Posterior vena cava (tissue), 2 donors: ENCODE measurements at regions of chr6 and their contacts with region 1.

Region 1: GRCh38 chr6:16681260-16681873 is 79.9 kb downstream of the ATXN1 start:
- DNase-seq: no peak

Region 2: GRCh38 chr6:14703586-14703985 is 1977.8 kb before region 1 on chr6:
- intact Hi-C with region 1: loop called in 1 of 2 experiments (anchors 5 kb)
- DNase-seq: no peak

Region 3: DNA sequence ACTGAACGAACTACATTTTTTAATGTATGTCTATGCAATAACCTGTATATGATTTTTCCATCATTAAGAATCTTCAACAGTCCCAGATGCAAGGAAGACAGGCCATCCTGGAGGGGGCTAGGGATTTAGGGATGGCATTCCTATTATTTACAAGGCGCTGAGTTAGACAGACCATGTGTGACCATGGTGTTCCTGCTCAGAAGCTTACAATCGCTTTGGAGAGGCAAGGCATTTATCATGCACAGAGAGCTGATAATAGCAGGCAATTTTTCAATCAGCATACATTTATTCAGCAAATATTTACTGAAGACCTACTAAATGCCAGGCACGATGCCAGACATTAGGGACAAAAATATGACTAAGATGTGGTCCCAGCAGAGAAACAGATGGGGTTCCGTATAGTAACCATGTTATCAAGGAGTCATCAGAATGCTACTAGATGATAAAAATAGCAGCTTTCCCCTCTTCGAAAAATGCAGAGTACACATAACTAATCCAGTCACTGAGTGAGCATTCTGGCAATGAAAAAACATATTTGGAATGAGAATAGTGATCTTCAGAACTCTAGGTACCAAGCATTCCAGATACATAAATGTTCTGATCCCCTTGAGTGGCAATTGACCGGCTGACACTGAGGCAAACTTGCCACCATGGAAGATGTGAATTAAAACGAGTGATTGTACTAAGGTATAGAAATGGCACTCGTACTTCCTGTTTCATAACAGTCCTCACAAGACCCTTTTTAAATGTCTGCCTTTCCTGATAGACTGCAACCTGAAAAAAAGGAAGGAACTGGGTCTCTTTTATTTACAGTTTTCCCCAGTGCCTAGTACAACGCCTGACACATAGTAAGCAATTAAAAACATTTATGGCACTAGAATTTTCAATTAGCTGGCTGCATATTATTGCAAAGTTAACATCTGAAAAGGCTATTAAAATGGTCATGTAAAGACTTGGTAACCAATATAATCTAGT is 55.8 kb before region 1 on chr6:
- intact Hi-C with region 1: loop called in 1 of 2 experiments (anchors 2 kb)
- DNase-seq: no peak

Region 4: DNA sequence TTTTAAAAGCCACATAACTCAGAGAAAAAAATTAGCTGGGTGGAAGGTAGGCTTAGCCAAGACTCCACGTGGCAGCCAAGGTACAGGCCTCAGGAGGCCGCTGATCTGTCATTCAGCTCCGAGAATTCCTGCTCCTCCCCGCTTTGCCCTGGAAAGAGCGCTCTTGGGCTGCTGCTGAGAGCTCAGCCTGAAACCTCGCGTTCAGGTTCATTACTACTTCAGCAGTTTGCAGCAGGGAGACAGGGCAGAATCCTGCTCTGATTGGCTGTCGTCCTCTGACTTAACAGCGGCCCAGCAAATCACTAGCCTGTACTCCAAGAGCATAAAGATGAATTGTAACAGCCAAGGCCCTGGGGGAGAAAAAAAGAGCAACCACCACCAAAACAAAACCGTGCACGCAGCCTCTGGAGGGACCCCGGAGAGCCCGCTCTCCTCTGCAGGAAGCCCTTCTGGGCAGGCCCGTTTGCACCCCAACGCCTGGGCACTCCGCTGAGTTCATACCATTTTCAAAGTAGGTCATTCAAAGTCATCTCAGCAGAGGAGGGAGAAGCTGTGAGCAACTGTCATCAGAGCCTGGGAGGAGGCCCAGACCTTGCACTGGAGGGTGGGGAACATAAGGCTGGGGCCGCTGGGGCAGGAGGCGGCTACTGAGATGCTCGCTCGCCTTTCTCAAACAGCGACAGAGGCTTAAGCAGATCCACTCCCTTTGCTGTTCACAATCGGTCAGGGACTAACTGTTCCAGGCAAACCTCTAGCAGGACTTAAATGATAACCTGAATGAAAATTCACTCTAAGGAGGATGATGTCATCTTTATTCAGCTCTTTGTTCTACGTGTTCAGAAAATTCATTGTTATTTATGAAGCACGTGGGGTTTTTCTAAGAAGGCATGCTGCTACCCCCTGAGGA is 122.2 kb after region 1 on chr6:
- intact Hi-C with region 1: no loop called
- DNase-seq: no peak